ENCODE measurements at regions of chr14 and their contacts with region 1.

Region 1: DNA sequence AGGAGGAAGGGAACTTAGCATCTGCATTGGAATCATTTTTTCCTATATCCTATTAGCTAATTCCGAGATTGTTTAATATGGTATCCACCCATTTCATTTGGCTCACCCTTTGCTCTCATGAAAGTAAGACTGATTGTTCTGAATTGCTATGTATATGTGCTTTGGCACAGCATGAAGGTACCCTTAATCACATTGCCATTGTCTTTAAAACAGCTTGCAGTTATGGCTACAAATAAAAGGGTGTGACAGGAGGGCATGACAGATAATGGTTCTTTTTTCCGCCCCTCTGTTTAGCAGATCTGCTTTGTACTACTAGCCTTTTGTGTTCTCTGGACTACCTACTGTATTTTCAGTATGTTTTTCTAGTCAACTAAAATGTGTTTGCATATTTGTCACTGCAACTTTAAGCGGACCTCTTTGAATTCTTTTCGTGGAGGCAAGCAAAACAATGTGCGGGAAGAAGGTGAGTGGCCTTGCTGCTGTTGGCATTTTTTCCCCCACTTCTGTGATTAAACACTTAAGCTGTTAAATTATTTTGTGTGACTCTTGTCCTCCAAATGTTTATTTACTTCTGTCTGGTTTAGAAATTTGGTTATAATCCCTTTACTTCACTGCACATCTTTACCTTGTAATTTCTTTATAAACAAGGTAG is 35.8 kb downstream of the FBXO34 start:
- DNase-seq: no peak
- ATAC-seq: no peak
- H3K4me3 ChIP-seq: no peak overlapping the region
- H3K27ac ChIP-seq: peak overlapping the region; percentile 23
- H3K4me1 ChIP-seq: peaks cover 81% of the 10 kb centered on the region
- H3K27me3 ChIP-seq: no peaks in the 10 kb centered on the region
- CTCF ChIP-seq: no peak

Region 2: GRCh38 chr14:55062517-55063351 is 244.3 kb before region 1 on chr14:
- intact Hi-C with region 1: no loop called
- DNase-seq: peak in 1 of 2 donors; percentile 29
- ATAC-seq: peak; percentile 58 to 79 (median 72)
- H3K4me3 ChIP-seq: no peak overlapping the region
- H3K27ac ChIP-seq: no peak overlapping the region
- H3K4me1 ChIP-seq: peaks cover 13% of the 10 kb centered on the region
- H3K27me3 ChIP-seq: no peaks in the 10 kb centered on the region
- CTCF ChIP-seq: no peak

Region 3: DNA sequence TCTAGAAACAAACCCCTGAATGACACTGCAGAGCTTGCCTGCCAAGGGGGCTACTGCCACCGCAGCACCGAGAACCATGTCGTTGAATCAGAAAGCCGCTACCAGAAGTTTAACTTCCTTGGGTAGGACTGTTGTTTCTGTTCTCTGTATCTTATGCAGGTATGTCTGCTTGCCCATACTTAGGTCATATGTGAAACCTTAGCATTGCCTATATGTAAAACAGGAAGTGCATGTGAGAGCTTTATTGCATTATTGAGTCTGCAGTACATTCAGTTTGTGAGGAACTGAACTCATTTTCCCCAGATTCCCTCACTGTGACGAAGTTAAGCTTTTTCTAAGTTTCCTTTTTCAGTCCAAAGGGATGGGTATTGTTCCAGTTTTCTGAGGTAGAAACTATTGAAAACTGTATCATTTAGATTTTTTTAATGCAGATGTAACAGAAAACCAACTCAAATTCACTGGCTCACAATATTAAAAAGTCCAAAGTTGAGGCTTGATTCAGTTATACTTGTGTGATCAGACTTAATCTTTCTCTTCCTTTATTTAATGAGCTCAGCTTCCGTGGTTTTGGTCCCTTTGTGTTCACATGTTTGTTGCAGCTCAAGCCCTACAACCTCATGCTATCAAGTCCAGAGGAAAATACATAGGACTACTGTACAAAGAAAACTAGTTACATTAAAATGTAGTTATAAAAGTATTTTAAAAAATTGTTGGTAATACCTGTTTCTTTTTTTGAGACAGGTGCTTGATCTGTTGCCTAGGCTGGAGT is 28.9 kb before region 1 on chr14:
- intact Hi-C with region 1: loop called (anchors 2 to 5 kb)
- DNase-seq: no peak
- ATAC-seq: no peak
- H3K4me3 ChIP-seq: no peak overlapping the region
- H3K27ac ChIP-seq: peak overlapping the region; percentile 54
- H3K4me1 ChIP-seq: peaks cover 52% of the 10 kb centered on the region
- H3K27me3 ChIP-seq: no peaks in the 10 kb centered on the region
- CTCF ChIP-seq: no peak

Region 4: GRCh38 chr14:55294603-55295002 is 12.5 kb before region 1 on chr14:
- intact Hi-C with region 1: no loop called
- DNase-seq: no peak
- ATAC-seq: no peak
- H3K4me3 ChIP-seq: no peak overlapping the region
- H3K27ac ChIP-seq: peak overlapping the region; percentile 1
- H3K4me1 ChIP-seq: peaks cover 21% of the 10 kb centered on the region
- H3K27me3 ChIP-seq: no peaks in the 10 kb centered on the region
- CTCF ChIP-seq: no peak

Region 5: GRCh38 chr14:55348766-55349453 is 41.8 kb after region 1 on chr14:
- intact Hi-C with region 1: loop called (anchors 5 kb)
- DNase-seq: no peak
- ATAC-seq: peak in 3 of 4 donors; percentile 26 to 40 (median 33)
- H3K4me3 ChIP-seq: no peak overlapping the region
- H3K27ac ChIP-seq: peak overlapping the region; percentile 44
- H3K4me1 ChIP-seq: peaks cover 31% of the 10 kb centered on the region
- H3K27me3 ChIP-seq: no peaks in the 10 kb centered on the region
- CTCF ChIP-seq: no peak

Measured in psoas muscle (tissue), 8 donors.